ENCODE measurements at regions of chr2 and their contacts with region 1.

Region 1: DNA sequence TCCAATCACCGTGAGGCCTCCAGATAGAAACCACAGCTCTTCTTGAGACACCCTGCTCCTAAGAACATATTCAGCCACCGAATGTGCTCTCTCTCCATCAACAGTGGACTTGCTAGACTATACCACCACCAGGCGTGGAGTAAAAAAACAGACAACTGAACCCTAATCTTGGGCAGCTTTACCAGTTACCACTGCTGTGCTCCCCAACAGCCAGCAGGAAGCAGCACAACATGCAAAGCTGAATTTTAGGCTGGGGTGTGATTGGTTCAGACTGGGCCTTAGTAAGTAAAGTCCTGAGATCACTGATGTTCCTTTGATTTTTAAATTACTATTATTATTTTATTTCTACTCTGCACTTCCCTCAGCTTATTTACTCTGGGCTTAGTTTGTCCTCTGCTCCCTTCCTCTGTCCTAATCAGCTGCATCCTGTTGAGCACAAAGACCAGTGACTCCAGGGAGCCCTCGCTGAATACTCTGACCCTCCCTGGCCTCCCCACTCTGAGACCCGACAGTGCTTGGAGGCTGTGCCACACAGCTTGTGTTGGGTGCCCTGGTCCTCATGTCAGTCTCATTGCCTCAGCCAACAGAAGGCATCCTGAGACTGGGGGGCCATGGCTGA is 21.9 kb downstream of the MRPL35 start:
- DNase-seq: peak; percentile 62
- H3K4me3 Mint-ChIP-seq: no peak overlapping the region
- H3K27ac Mint-ChIP-seq: no peak overlapping the region
- H3K4me1 Mint-ChIP-seq: no peaks in the 10 kb centered on the region
- H3K27me3 Mint-ChIP-seq: no peaks in the 10 kb centered on the region
- CTCF ChIP-seq: peak; percentile 85

Region 2: DNA sequence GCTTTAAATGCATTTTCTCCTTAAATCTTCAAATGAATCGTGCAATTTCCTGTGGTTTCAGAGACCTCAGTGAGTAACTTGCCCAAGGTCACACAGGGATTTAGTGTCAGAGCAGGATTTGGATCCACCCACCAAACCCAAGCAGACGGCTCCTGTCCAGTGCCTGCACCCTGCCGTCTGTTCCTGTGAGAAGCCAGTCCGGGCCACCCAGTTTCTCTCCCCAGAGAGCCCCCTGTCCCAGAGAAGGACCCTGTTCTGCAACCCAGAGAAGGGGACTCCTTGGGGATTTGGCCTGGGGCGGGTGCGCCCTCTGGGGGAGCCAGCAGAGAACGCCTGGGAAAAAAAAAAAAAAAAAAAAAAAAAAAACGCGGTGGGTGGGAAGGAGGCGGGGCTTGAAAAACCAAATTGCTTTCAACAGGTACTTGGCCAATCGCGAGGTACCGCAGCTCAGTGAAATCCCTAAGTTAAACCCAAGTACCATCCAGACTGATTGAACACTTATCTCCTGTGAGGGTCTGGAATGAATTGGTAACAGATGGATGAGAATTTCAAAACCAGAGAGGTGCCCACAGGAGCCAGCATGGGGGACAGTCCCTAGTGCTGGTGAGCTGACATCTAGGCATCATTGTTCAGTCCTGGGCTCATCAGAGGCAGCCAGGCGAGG is 147.1 kb after region 1 on chr2:
- CTCF ChIA-PET with region 1: interaction called, 28 read pairs
- intact Hi-C with region 1: loop called (anchors 1 kb)
- DNase-seq: peak; percentile 49
- H3K4me3 Mint-ChIP-seq: peak overlapping the region; percentile 21
- H3K27ac Mint-ChIP-seq: no peak overlapping the region
- H3K4me1 Mint-ChIP-seq: peaks cover 13% of the 10 kb centered on the region
- H3K27me3 Mint-ChIP-seq: peaks cover 3% of the 10 kb centered on the region
- CTCF ChIP-seq: peak; percentile 69